ENCODE measurements at regions of chr12 and their contacts with region 1.

Region 1: DNA sequence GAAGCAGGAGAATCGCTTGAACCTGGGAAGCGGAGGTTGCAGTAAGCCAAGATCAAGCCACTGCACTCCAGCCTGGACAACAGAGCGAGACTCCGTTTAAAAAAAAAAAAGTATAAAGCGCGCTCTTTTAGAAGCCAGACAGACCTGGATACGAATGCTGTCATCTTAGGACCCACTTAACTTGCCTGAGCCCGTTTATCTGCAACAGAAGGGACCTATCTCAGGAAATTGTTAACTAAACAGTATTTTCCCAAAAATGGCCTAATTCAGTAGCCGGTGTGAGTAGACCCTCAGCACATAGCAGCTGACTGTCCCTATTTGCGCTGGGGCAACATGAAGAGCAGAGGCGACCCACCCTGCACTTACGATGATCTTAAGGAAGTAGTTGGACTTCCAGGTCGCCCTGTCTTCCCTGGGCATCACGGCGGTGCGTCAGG is 529 bp downstream of the RPLP0 start:
- DNase-seq: no peak
- H3K4me3 Mint-ChIP-seq: peak overlapping the region; percentile 97
- H3K27ac Mint-ChIP-seq: peak overlapping the region; percentile 100
- H3K4me1 Mint-ChIP-seq: peaks cover 52% of the 10 kb centered on the region
- H3K27me3 Mint-ChIP-seq: no peaks in the 10 kb centered on the region

Region 2: GRCh38 chr12:120116792-120117651 is 83.4 kb before region 1 on chr12:
- CTCF ChIA-PET with region 1: interaction called, 17 read pairs
- POLR2A ChIA-PET with region 1: interaction called, 236 read pairs
- DNase-seq: peak; percentile 98
- H3K4me3 Mint-ChIP-seq: peak overlapping the region; percentile 89
- H3K27ac Mint-ChIP-seq: peak overlapping the region; percentile 80
- H3K4me1 Mint-ChIP-seq: peaks cover 76% of the 10 kb centered on the region
- H3K27me3 Mint-ChIP-seq: no peaks in the 10 kb centered on the region

Region 3: DNA sequence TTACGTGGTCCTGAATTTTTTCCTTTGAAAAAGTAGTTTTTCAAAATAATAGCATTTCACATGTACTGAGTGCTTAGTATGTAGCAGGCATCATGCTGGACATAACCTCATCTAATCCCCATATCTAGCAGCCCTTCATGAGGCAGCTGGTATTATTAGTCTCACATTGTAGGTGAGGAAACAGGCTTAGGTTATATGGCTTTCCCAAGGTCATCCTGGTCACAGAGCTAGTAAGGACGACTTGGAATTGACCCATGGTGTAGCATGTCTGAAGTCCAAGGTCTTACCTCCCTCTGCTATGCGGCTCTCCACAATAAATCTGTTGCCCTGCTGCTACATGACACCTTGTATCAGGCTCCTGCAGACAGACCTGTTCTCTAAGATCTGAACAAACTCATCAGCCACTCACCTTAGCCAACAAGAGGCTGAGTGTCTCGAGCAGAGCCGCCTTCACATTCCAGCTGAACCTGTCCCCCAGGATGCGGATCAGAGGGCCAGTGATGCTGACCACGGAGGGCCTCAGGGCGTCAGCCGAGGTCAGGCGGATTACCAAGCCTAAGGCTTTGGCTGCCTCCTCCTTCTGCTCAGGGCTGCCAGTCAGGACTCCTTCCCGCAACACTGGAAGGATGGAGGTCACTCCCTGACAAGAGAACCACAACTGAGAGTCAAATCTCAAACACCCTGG is 64.1 kb before region 1 on chr12:
- CTCF ChIA-PET with region 1: no interaction called
- POLR2A ChIA-PET with region 1: no interaction called
- DNase-seq: no peak
- H3K4me3 Mint-ChIP-seq: no peak overlapping the region
- H3K27ac Mint-ChIP-seq: no peak overlapping the region
- H3K4me1 Mint-ChIP-seq: no peaks in the 10 kb centered on the region
- H3K27me3 Mint-ChIP-seq: no peaks in the 10 kb centered on the region

Region 4: GRCh38 chr12:120172053-120172452 is 28.3 kb before region 1 on chr12:
- CTCF ChIA-PET with region 1: interaction called, 6 read pairs
- POLR2A ChIA-PET with region 1: interaction called, 13 read pairs
- DNase-seq: no peak
- H3K4me3 Mint-ChIP-seq: no peak overlapping the region
- H3K27ac Mint-ChIP-seq: no peak overlapping the region
- H3K4me1 Mint-ChIP-seq: peaks cover 3% of the 10 kb centered on the region
- H3K27me3 Mint-ChIP-seq: no peaks in the 10 kb centered on the region

Region 5: DNA sequence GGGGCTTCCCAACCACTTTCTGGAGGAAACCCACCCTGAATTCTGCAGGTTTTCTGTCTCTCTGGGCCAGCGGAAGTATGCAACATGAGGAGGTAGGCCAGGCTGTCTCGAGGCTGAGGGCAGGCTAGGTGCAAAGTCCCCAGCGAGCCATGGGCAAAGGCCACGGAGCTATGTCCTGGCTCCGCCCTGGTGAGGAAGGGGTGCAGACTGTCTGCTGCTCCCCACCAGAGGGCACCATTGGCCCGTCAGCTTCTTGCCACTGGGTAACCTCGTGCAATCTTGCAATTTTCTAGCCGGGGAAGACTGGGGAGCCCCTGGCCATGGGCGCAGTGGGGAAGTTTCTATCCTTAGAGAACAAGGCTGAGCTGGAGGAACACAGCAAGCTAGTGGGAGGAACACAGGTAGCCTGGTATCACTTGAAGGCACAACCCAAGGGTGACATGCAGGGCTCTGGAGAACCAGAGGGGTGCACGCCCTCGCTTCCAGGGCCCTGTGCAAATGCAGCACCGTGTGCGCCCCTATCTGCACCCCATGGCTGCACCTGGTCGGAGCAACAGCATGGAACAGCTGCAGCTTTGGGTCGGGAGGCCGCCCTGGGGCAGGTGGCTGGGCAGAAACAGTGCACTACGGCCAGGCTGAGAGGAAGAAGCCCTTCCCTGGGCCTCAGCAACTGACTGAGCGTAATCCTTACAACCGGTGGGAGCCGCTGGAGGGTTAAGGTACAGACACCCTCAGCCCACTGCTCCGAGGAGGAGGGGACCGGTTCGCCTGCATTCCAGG is 28.1 kb after region 1 on chr12:
- CTCF ChIA-PET with region 1: interaction called, 92 read pairs
- POLR2A ChIA-PET with region 1: interaction called, 159 read pairs
- DNase-seq: peak; percentile 91
- H3K4me3 Mint-ChIP-seq: peak overlapping the region; percentile 47
- H3K27ac Mint-ChIP-seq: peak overlapping the region; percentile 77
- H3K4me1 Mint-ChIP-seq: peaks cover 85% of the 10 kb centered on the region
- H3K27me3 Mint-ChIP-seq: no peaks in the 10 kb centered on the region

Region 6: GRCh38 chr12:120265473-120266179 is 65.2 kb after region 1 on chr12 and contains the start of gene PXN:
- CTCF ChIA-PET with region 1: interaction called, 103 read pairs
- POLR2A ChIA-PET with region 1: interaction called, 168 read pairs
- DNase-seq: peak; percentile 92
- H3K4me3 Mint-ChIP-seq: peak within 1 kb of the TSS; percentile 90
- H3K27ac Mint-ChIP-seq: peak within 1 kb of the TSS; percentile 81
- H3K4me1 Mint-ChIP-seq: peaks cover 42% of the 10 kb centered on the region
- H3K27me3 Mint-ChIP-seq: no peaks in the 10 kb centered on the region
- total RNA-seq, gene PXN: 271 to 274 TPM

Measured in activated CD4-positive, alpha-beta memory T cell treated with anti-CD3 and anti-CD28 coated beads, Interleukin-2, amount 10 ng/mL, durations not matched to agents 7 days and 5 days (primary cell).